ENCODE measurements at regions of chr12 and their contacts with region 1.

Region 1: GRCh38 chr12:96399919-96400797 is at the start of gene CDK17:
- DNase-seq: peak; percentile 91
- ATAC-seq: peak; percentile 72
- H3K4me3 Mint-ChIP-seq: peak within 1 kb of the TSS; percentile 95
- H3K27ac Mint-ChIP-seq: peak within 1 kb of the TSS; percentile 95
- H3K4me1 Mint-ChIP-seq: peaks cover 61% of the 10 kb centered on the region
- H3K27me3 Mint-ChIP-seq: no peaks in the 10 kb centered on the region
- CTCF ChIP-seq: no peak
- total RNA-seq, gene CDK17: 52.1 and 57.3 TPM in 2 replicates

Region 2: DNA sequence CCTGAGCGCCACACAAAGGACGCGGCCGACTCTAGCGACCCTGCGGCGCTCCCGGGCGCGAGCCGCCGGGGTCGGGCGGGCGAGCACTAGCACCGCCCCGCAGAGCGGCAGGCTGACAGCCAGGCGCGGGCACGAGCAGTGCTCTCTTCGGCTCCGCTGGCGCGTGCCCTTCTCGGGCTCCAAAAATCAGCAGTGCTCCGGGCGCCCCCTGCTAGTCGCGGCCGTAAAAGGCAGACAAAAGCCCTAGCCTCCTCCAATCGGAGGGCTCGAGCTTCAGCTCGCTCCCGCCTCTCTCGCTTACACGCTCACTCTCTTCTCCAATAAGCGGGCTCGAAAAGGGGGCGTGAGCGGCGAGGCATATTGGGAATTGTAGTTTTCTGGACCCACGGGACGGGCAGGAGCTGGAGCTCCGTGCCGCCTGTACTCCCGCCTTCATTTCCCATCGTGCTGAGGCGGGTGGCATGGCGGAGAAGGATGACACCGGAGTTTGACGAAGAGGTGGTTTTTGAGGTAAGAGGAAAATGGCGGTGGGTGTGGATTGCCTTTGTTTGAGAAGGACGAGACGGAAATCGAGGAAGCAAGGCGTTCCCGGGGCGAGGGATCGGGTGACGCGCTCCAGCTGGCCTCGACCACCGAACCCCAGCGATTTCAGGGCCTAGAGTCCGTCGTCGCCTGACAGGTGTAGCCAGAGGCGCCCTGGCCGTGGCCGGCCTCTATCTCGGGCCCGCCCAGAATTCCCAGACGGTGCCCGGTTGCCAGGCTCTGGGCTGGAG is 1182.6 kb before region 1 on chr12 and contains the starts of genes FGD6 and VEZT:
- CTCF ChIA-PET with region 1: no interaction called
- POLR2A ChIA-PET with region 1: no interaction called
- intact Hi-C with region 1: loop called (anchors 2 kb)
- DNase-seq: peak; percentile 92
- ATAC-seq: peak; percentile 92
- H3K4me3 Mint-ChIP-seq: peak within 1 kb of the TSS; percentile 96
- H3K27ac Mint-ChIP-seq: peak within 1 kb of the TSS; percentile 95
- H3K4me1 Mint-ChIP-seq: peaks cover 42% of the 10 kb centered on the region
- H3K27me3 Mint-ChIP-seq: no peaks in the 10 kb centered on the region
- CTCF ChIP-seq: no peak
- total RNA-seq, gene FGD6: 3.7 and 5.4 TPM in 2 replicates
- total RNA-seq, gene VEZT: 47.2 and 58.7 TPM in 2 replicates

Region 3: DNA sequence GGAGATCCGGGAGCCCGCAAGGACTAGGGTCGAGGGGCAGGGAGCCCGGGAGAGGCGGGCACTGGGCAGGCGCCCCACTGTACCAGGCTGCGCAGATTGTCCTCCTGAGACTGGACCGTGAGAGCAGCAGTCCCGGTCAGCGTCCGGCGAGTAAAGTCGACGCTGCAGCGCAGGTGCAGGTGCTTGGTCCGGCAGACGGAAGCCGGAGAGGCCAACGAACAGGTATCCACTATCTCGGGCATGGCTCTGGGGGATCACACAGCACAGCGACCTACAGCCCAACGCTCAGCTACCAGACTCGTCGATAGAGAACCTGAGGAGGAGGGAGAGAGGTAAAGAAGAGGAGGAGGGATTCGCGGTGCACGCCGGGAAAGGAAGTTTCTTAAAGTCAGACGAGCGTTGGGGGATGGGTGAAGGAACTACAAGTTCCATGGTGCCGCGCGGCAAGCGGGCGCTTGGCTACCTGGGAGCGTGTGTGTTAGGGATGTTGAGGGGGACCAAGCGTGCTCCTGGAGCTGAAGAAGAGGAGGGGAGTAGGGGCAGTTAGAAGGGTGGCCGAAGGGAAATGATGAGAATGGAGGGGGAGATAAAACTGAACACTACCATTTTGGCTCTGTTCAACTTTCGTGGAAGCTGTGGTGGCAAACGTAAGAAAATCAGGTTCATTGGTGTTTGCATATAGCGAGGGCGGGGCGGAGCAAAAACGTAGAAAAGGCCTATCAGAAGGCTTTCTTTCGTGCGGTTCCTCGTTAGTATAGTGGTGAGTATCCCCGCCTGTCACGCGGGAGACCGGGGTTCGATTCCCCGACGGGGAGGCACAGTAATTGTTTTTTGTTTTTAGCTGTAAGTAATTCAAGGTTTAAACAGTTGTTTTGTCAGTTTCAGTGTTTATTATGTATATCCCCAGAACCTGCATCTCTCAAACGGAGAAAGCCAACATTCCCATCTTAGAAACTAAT is 364.6 kb before region 1 on chr12 and contains the start of gene LTA4H:
- CTCF ChIA-PET with region 1: no interaction called
- POLR2A ChIA-PET with region 1: interaction called, 11 read pairs
- intact Hi-C with region 1: loop called (anchors 1 kb)
- DNase-seq: peak; percentile 88
- ATAC-seq: peak; percentile 86
- H3K4me3 Mint-ChIP-seq: no peak within 1 kb of the TSS
- H3K27ac Mint-ChIP-seq: no peak within 1 kb of the TSS
- H3K4me1 Mint-ChIP-seq: peaks cover 26% of the 10 kb centered on the region
- H3K27me3 Mint-ChIP-seq: no peaks in the 10 kb centered on the region
- CTCF ChIP-seq: no peak
- total RNA-seq, gene LTA4H: 119 and 124 TPM in 2 replicates

Region 4: DNA sequence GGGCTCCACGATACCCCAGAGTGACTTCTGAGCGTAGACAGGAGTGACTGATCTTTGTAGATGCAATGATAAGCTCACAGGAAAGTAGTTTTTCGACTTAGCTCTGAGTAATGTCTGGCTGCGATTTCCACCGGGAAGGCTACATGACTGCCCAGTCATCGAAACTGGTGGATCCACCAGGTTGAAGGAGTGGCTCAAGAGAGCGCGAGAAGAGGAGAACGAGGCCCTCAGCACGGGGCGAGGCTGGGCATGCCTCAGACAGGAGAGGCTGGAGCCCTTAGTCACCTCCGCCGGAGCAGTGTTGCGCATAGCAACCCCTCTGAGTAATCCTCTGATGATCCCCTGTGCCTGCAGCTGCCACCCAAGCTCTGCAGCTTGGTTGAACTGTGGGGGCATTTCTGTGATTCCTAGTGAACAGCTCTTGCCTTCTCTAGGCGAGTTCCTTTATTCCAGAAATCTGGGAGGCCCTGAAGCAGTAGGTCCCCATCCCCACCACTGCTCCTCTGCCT is 180.4 kb before region 1 on chr12:
- CTCF ChIA-PET with region 1: interaction called, 16 read pairs
- POLR2A ChIA-PET with region 1: interaction called, 31 read pairs
- intact Hi-C with region 1: loop called (anchors 1 kb)
- DNase-seq: no peak
- ATAC-seq: no peak
- H3K4me3 Mint-ChIP-seq: no peak overlapping the region
- H3K27ac Mint-ChIP-seq: no peak overlapping the region
- H3K4me1 Mint-ChIP-seq: peaks cover 30% of the 10 kb centered on the region
- H3K27me3 Mint-ChIP-seq: no peaks in the 10 kb centered on the region
- CTCF ChIP-seq: no peak

Region 5: GRCh38 chr12:96386794-96387193 is 13.4 kb before region 1 on chr12:
- CTCF ChIA-PET with region 1: interaction called, 5 read pairs
- POLR2A ChIA-PET with region 1: interaction called, 10 read pairs
- intact Hi-C with region 1: no loop called
- DNase-seq: no peak
- ATAC-seq: no peak
- H3K4me3 Mint-ChIP-seq: no peak overlapping the region
- H3K27ac Mint-ChIP-seq: peak overlapping the region; percentile 38
- H3K4me1 Mint-ChIP-seq: peaks cover 63% of the 10 kb centered on the region
- H3K27me3 Mint-ChIP-seq: no peaks in the 10 kb centered on the region
- CTCF ChIP-seq: no peak

Region 6: GRCh38 chr12:96501139-96501761 is 101.1 kb after region 1 on chr12:
- CTCF ChIA-PET with region 1: interaction called, 3 read pairs
- POLR2A ChIA-PET with region 1: interaction called, 12 read pairs
- intact Hi-C with region 1: no loop called
- DNase-seq: no peak
- ATAC-seq: peak; percentile 65
- H3K4me3 Mint-ChIP-seq: no peak overlapping the region
- H3K27ac Mint-ChIP-seq: peak overlapping the region; percentile 55
- H3K4me1 Mint-ChIP-seq: peaks cover 35% of the 10 kb centered on the region
- H3K27me3 Mint-ChIP-seq: no peaks in the 10 kb centered on the region
- CTCF ChIP-seq: no peak